ENCODE measurements at regions of chr1 and their contacts with region 1.

Region 1: GRCh38 chr1:113677250-113678158 is 81.8 kb downstream of the PHTF1 start:
- DNase-seq: no peak
- H3K4me3 ChIP-seq: no peak overlapping the region
- CTCF ChIP-seq: peak; percentile 25

Region 2: DNA sequence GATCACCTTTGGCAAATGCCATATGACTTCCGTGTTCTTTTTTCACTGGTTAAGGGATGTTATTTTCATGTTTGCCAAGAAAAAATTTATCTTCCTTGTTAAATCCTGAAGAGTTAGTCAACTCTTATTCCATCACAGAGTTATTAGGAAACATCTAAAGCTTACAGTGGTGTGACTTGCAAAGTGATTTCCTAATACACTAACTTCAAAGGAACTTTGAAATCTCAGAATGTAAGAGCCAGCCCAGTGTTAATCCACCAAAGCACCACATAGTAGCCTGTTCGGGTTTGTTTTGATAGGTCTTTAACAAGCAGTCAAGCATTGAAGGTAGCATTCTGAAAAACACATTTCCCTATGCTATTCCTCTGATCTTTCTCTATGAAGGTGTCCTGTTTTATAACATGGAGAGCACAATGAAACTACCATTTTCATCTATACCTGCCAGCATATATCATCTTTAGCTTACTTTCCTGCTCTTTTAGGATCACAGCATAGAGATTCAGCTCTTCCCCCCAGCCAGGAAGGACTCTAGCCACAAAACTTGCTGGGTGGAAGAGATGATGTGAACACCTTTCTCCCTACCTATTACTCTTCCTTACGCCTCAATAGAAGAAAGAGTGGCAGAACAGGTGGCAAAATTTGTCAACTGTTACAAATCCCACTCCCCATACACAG is 369.6 kb before region 1 on chr1:
- CTCF ChIA-PET with region 1: no interaction called
- POLR2A ChIA-PET with region 1: no interaction called
- DNase-seq: no peak
- H3K4me3 ChIP-seq: no peak overlapping the region
- CTCF ChIP-seq: no peak

Region 3: GRCh38 chr1:113692342-113692741 is 14.8 kb after region 1 on chr1:
- CTCF ChIA-PET with region 1: interaction called, 11 read pairs
- POLR2A ChIA-PET with region 1: no interaction called
- DNase-seq: no peak
- H3K4me3 ChIP-seq: no peak overlapping the region
- CTCF ChIP-seq: no peak

Measured in AG04449 (cell line).